ENCODE measurements at regions of chr2 and their contacts with region 1.

Region 1: GRCh38 chr2:44433881-44434280 is 72.1 kb downstream of the CAMKMT start:
- DNase-seq: no peak
- ATAC-seq: no peak
- H3K4me3 ChIP-seq: no peak overlapping the region
- H3K27ac ChIP-seq: no peak overlapping the region
- H3K4me1 ChIP-seq: peaks cover 0 to 2% of the 10 kb centered on the region in 2 experiments; a peak in 1 of 4 replicates
- H3K27me3 ChIP-seq: no peaks in the 10 kb centered on the region
- CTCF ChIP-seq: no peak
- POLR2A ChIP-seq: no peak
- RAD21 ChIP-seq: no peak

Region 2: GRCh38 chr2:44490726-44491125 is 56.8 kb after region 1 on chr2:
- CTCF ChIA-PET with region 1: no interaction called
- POLR2A ChIA-PET with region 1: no interaction called
- RAD21 ChIA-PET with region 1: no interaction called
- intact Hi-C with region 1: loop called (anchors 1 kb)
- DNase-seq: no peak
- ATAC-seq: no peak
- H3K4me3 ChIP-seq: no peak overlapping the region
- H3K27ac ChIP-seq: no peak overlapping the region
- H3K4me1 ChIP-seq: no peaks in the 10 kb centered on the region
- H3K27me3 ChIP-seq: no peaks in the 10 kb centered on the region
- CTCF ChIP-seq: no peak
- POLR2A ChIP-seq: no peak
- RAD21 ChIP-seq: no peak

Measured in HCT116 (cell line).